OCI-LY7 (cell line): ENCODE measurements at regions of chr1 and their contacts with region 1.

Region 1: GRCh38 chr1:47351305-47351704 is 17.7 kb downstream of the CMPK1 start:
- DNase-seq: no peak
- H3K4me3 ChIP-seq: no peak overlapping the region
- H3K27ac ChIP-seq: no peak overlapping the region
- H3K4me1 ChIP-seq: no peaks in the 10 kb centered on the region
- CTCF ChIP-seq: no peak

Region 2: GRCh38 chr1:47340227-47340626 is 11.1 kb before region 1 on chr1:
- CTCF ChIA-PET with region 1: no interaction called
- POLR2A ChIA-PET with region 1: interaction called, 11 read pairs
- intact Hi-C with region 1: no loop called
- DNase-seq: no peak
- H3K4me3 ChIP-seq: no peak overlapping the region
- H3K27ac ChIP-seq: no peak overlapping the region
- H3K4me1 ChIP-seq: peaks cover 6% of the 10 kb centered on the region
- CTCF ChIP-seq: no peak

Region 3: GRCh38 chr1:47437447-47438164 is 86.3 kb after region 1 on chr1 and contains the start of gene FOXD2:
- CTCF ChIA-PET with region 1: no interaction called
- POLR2A ChIA-PET with region 1: no interaction called
- intact Hi-C with region 1: no loop called
- DNase-seq: peak; percentile 97
- H3K4me3 ChIP-seq: peak within 1 kb of the TSS; percentile 92
- H3K27ac ChIP-seq: peak within 1 kb of the TSS; percentile 78
- H3K4me1 ChIP-seq: peaks cover 11% of the 10 kb centered on the region
- CTCF ChIP-seq: peak; percentile 80
- total RNA-seq, gene FOXD2: 0.44 and 0.76 TPM in 2 replicates

Region 4: GRCh38 chr1:47449822-47450552 is 98.7 kb after region 1 on chr1:
- CTCF ChIA-PET with region 1: no interaction called
- POLR2A ChIA-PET with region 1: no interaction called
- intact Hi-C with region 1: no loop called
- DNase-seq: no peak
- H3K4me3 ChIP-seq: no peak overlapping the region
- H3K27ac ChIP-seq: no peak overlapping the region
- H3K4me1 ChIP-seq: no peaks in the 10 kb centered on the region
- CTCF ChIP-seq: peak; percentile 56